Mammary epithelial cell (primary cell): ENCODE measurements at regions of chr9 and their contacts with region 1.

Region 1: DNA sequence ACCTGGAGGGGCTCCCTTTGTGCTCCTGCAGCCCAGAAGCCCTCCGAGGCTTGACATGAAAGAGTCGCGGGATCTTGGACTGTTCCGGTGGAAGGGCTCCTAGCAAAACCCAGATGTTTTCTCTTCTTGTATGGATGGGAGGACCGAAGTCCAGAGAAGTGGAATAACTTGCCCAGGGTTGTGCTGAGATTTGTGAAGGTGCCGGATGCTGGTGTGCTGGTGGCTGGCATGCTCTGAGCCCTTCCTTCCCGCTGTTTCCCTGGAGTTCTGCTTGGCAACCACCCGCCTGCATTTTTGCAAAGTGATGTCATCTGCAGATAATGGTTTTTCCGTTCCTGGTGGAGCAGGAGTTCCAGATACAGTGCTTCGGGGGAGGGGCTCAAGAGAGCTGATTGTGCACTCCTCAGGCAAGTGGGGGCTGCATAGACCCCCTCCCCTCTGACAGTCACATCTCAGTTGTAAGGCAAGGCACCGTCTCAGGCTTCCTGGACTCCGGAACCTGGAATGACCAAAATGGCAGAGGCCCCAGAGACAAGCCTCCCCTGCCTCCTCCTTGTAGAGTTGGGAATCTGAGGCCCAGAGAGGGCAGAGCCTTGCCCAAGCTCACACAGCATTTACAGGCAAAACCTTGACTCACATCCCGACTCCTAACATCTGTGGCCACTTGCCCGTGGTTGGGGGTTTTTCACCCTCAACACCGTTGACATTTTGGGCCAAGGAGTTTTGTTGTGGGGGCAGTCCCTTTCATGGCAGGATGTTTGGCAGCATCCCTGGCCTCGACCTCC is 157.0 kb downstream of the RGS3 start:
- DNase-seq: peak; percentile 78
- H3K4me3 ChIP-seq: no peak overlapping the region
- H3K27ac ChIP-seq: peak overlapping the region; percentile 83
- H3K4me1 ChIP-seq: peaks cover 49% of the 10 kb centered on the region
- H3K27me3 ChIP-seq: no peaks in the 10 kb centered on the region
- CTCF ChIP-seq: no peak

Region 2: GRCh38 chr9:113548221-113549041 is 72.1 kb before region 1 on chr9:
- CTCF ChIA-PET with region 1: no interaction called
- dilution Hi-C with region 1: no loop called
- in situ Hi-C with region 1: no loop called
- intact Hi-C with region 1: no loop called
- DNase-seq: peak; percentile 51
- H3K4me3 ChIP-seq: no peak overlapping the region
- H3K27ac ChIP-seq: no peak overlapping the region
- H3K4me1 ChIP-seq: peaks cover 12% of the 10 kb centered on the region
- H3K27me3 ChIP-seq: no peaks in the 10 kb centered on the region
- CTCF ChIP-seq: no peak

Region 3: DNA sequence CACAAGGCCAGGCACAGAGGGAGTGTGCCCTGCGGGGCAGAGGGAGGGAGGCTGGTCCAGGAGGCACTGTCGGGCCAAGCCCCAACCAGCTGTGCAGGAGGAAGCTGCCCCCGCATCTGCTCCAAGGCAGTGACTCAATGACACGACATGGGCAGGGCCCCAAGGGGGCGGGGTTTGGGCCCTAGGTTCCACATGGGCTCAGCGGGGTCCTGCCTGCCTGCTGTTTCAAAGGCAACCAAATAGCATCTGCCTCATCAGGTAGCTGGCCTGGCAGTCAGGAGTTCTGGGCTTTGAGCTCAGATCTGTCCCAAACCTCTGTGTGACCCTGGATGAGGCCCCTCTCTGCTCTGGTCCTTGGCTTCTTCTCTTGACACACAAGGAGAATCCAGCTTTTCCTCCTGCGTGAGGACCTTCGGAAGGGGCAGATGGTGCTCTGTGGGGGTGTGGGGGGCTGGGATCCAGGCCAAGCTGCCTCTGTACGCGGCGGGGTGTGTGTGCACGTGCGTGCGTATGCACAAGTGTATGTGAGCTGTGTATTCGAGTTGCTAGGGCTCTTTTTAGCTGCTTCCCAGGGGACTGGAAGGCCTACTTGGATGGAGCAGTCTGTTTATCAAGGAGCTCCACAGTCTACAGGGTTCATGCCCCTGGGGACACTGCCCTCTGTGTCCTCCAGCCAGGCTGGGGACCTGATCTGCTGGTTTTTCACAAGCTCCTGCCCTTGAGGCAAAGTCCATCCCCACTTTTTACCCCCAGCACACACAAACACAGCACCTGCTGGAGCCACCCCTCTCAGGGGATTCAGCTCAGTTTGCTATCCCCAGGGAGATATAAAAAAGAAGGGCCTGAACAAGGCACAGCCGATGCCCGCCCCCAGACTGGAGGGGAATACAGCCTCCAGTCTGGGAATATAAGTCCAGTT is 18.2 kb before region 1 on chr9:
- CTCF ChIA-PET with region 1: interaction called, 5 read pairs
- dilution Hi-C with region 1: no loop called
- in situ Hi-C with region 1: no loop called
- intact Hi-C with region 1: loop called (anchors 1 kb)
- DNase-seq: peak; percentile 80
- H3K4me3 ChIP-seq: no peak overlapping the region
- H3K27ac ChIP-seq: peak overlapping the region; percentile 29
- H3K4me1 ChIP-seq: peaks cover 27% of the 10 kb centered on the region
- H3K27me3 ChIP-seq: no peaks in the 10 kb centered on the region
- CTCF ChIP-seq: no peak

Region 4: DNA sequence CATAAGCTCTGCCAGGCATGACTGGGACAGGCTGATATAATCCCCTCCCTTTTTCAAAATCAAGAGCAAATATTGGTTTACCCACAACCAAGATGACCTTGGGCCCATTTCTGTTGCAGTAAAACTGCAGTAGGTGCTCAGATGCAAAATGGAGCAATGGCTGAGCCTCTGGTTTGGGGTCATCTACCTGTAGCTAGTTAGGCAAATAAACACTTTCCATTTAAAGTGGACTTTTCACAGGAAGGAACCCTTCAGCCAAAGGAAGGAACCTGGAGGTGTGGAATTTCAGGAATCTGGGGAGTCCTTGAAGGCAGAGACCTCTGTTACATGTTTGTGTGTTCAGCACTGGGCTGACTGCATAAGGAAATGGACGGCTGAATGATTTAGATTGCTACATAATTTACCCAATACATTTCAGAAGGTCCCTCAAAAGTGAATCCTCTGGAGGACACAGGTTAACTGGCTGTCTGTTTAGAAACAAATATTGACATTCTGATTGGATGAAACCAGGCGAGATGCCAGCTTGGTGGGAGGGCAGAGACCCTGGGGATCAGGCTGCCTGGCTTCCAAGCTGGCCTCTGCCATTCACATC is 85.5 kb after region 1 on chr9:
- CTCF ChIA-PET with region 1: no interaction called
- dilution Hi-C with region 1: no loop called
- in situ Hi-C with region 1: no loop called
- intact Hi-C with region 1: no loop called
- DNase-seq: no peak
- H3K4me3 ChIP-seq: no peak overlapping the region
- H3K27ac ChIP-seq: no peak overlapping the region
- H3K4me1 ChIP-seq: no peaks in the 10 kb centered on the region
- H3K27me3 ChIP-seq: no peaks in the 10 kb centered on the region
- CTCF ChIP-seq: no peak